Caco-2 (cell line): ENCODE measurements at regions of chr20 and their contacts with region 1.

Region 1: DNA sequence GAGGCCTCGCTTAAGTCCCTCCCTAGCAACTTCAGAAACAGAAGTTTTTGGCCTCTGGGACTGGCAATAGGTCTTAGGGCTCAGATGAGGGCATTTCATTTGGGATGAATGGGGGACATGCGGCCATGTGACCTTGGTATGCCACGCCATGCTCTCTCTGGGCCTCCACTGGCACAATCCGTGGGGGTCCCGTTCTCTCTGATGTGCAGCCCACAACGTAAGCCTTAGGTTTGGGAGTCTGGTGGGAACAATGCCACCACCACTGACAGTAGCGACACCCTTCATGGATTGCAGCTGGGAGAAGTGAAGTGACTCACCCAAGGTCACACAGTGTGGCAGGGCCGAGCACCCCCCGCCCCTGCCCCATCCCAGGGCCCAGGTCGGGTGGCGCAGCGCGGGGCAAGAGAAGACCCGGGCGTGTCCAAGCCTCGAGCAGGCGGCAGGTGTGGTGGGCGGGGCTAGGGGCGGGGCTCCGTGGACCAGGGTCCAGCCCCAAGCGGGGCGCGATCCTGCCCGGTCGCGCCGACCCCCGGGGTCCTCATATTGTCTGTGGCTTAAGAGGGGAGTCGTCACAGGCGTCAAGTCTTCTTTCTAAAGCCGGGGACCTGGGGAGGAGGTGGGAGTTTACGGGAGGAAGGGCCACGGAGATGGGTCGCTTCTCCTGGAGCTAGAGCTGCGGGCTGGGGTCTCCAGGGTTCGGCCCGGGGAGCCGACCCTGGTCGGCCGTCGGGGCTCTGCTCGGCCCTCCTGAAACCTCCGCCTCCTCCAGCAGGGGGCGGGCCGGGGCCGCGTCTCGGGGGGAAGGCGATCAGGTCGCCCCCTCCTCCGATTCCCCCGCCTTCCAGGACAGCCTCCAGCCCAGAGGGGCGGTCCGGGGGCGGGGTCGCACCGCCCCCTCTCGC is 698 bp upstream of the CEBPB start:
- DNase-seq: peak; percentile 96 to 100
- H3K4me3 ChIP-seq: peak overlapping the region; percentile 96
- H3K4me3 Mint-ChIP-seq: peak overlapping the region; percentile 94
- H3K27ac Mint-ChIP-seq: peak overlapping the region; percentile 99
- H3K4me1 ChIP-seq: peaks cover 49% of the 10 kb centered on the region
- H3K4me1 Mint-ChIP-seq: peaks cover 54% of the 10 kb centered on the region
- H3K27me3 ChIP-seq: no peaks in the 10 kb centered on the region
- H3K27me3 Mint-ChIP-seq: no peaks in the 10 kb centered on the region
- CTCF ChIP-seq: peak; percentile 99

Region 2: DNA sequence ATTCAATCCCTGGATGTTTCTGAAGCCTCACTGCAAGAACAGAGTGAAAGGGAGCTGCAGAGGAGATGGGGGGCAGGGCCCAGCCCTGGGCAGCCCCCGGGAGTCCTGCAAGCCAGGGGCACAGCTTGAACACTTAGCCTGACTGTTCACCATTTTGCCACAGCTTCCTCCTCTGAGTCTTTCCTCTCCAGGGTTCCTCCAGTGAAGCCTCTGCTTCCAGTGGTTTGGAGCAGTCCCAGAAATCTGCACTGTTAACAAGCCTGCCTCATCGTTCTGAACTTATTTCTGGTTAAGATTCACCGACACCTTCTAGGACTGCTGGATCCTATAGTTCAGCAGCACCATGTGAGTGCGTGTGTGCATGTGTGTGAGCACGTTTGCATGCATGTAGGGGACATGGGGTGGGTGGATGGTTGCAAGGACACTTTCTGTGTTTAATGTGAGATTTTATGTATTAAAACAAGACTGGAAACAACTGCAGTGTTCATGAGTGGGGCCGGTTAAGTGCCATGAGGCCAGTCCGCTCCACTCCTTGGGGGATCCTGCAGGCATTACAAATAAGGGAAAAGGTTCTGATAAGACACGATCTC is 25.3 kb after region 1 on chr20:
- CTCF ChIA-PET with region 1: interaction called, 16 read pairs
- POLR2A ChIA-PET with region 1: interaction called, 32 read pairs
- intact Hi-C with region 1: loop called (anchors 1 kb)
- DNase-seq: no peak
- H3K4me3 ChIP-seq: no peak overlapping the region
- H3K4me3 Mint-ChIP-seq: peak overlapping the region; percentile 27
- H3K27ac Mint-ChIP-seq: peak overlapping the region; percentile 27
- H3K4me1 ChIP-seq: peaks cover 62% of the 10 kb centered on the region
- H3K4me1 Mint-ChIP-seq: peaks cover 65% of the 10 kb centered on the region
- H3K27me3 ChIP-seq: no peaks in the 10 kb centered on the region
- H3K27me3 Mint-ChIP-seq: no peaks in the 10 kb centered on the region
- CTCF ChIP-seq: no peak

Region 3: DNA sequence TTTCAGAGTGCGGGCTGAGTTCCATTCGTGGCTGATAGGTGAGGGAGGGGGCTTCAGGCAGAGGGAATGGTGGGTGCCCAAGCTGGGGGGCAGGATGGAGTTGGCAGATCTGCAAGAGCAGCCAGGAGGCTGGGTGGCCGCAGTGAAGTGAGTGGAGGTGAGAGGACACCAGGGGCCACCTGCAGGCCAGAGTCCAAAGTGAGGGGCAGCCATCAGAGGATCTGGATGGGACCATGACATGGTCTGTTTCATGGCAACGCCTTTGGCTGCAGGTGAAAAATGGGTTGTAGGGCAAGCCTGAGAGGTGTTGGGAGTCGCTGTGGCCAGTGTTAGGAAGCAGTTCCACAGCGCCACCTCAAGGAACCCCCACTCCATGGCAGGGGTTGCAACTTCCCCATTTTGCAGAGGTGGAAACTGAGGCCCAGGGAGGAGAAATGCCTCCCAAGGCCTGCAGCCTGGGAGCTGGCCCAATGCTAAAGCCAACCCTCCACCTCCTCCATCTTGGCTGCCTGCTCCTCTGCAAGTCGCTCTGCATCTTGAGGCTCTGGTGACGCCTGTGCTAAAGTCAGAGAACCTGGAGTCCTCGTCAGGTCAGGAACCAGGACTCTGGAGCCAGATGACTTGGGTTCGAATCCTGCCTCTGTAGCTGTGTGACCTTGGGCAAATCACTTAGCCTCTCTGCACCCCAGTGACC is 154.4 kb after region 1 on chr20:
- CTCF ChIA-PET with region 1: interaction called, 4 read pairs
- POLR2A ChIA-PET with region 1: interaction called, 4 read pairs
- intact Hi-C with region 1: loop called (anchors 2 kb)
- DNase-seq: peak; percentile 54 to 69
- H3K4me3 ChIP-seq: no peak overlapping the region
- H3K4me3 Mint-ChIP-seq: no peak overlapping the region
- H3K27ac Mint-ChIP-seq: no peak overlapping the region
- H3K4me1 ChIP-seq: no peaks in the 10 kb centered on the region
- H3K4me1 Mint-ChIP-seq: no peaks in the 10 kb centered on the region
- H3K27me3 ChIP-seq: no peaks in the 10 kb centered on the region
- H3K27me3 Mint-ChIP-seq: no peaks in the 10 kb centered on the region
- CTCF ChIP-seq: peak; percentile 28 to 44

Region 4: GRCh38 chr20:50379049-50379990 is 189.4 kb after region 1 on chr20:
- CTCF ChIA-PET with region 1: no interaction called
- POLR2A ChIA-PET with region 1: no interaction called
- intact Hi-C with region 1: no loop called
- DNase-seq: no peak
- H3K4me3 ChIP-seq: no peak overlapping the region
- H3K4me3 Mint-ChIP-seq: no peak overlapping the region
- H3K27ac Mint-ChIP-seq: peak overlapping the region; percentile 0
- H3K4me1 ChIP-seq: peaks cover 31% of the 10 kb centered on the region
- H3K4me1 Mint-ChIP-seq: peaks cover 27% of the 10 kb centered on the region
- H3K27me3 ChIP-seq: no peaks in the 10 kb centered on the region
- H3K27me3 Mint-ChIP-seq: no peaks in the 10 kb centered on the region
- CTCF ChIP-seq: no peak

Region 5: GRCh38 chr20:50415516-50416113 is 225.7 kb after region 1 on chr20:
- CTCF ChIA-PET with region 1: no interaction called
- POLR2A ChIA-PET with region 1: no interaction called
- intact Hi-C with region 1: loop called (anchors 5 kb)
- DNase-seq: peak in 1 of 2 experiments; percentile 45
- H3K4me3 ChIP-seq: no peak overlapping the region
- H3K4me3 Mint-ChIP-seq: no peak overlapping the region
- H3K27ac Mint-ChIP-seq: peak overlapping the region; percentile 32
- H3K4me1 ChIP-seq: peaks cover 28% of the 10 kb centered on the region
- H3K4me1 Mint-ChIP-seq: peaks cover 35% of the 10 kb centered on the region
- H3K27me3 ChIP-seq: no peaks in the 10 kb centered on the region
- H3K27me3 Mint-ChIP-seq: no peaks in the 10 kb centered on the region
- CTCF ChIP-seq: no peak

Region 6: DNA sequence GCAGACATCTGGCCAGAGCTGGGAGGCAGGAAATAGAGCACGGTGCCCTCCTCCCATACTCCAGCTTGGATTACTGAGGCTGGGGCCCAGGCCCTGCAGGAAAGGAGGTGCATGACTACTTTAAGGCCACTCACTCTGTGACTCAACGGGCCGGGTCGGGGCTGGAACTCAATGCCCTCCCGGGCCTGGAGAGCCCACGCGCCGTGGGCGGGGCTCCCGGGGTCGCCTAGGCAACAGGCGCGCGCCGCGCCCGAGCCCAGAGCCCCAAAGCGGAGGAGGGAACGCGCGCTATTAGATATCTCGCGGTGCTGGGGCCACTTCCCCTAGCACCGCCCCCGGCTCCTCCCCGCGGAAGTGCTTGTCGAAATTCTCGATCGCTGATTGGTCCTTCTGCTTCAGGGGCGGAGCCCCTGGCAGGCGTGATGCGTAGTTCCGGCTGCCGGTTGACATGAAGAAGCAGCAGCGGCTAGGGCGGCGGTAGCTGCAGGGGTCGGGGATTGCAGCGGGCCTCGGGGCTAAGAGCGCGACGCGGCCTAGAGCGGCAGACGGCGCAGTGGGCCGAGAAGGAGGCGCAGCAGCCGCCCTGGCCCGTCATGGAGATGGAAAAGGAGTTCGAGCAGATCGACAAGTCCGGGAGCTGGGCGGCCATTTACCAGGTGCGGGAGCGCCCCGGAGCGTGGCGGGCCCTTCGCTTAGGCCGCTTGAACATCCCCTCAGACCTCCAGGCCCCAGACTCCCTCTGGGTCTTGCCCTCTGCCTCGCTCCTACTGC is 320.2 kb after region 1 on chr20 and contains the start of gene PTPN1:
- CTCF ChIA-PET with region 1: no interaction called
- POLR2A ChIA-PET with region 1: interaction called, 4 read pairs
- intact Hi-C with region 1: loop called (anchors 1 kb)
- DNase-seq: peak; percentile 100
- H3K4me3 ChIP-seq: peak within 1 kb of the TSS; percentile 98
- H3K4me3 Mint-ChIP-seq: peak within 1 kb of the TSS; percentile 99
- H3K27ac Mint-ChIP-seq: peak within 1 kb of the TSS; percentile 97
- H3K4me1 ChIP-seq: peaks cover 36% of the 10 kb centered on the region
- H3K4me1 Mint-ChIP-seq: peaks cover 22% of the 10 kb centered on the region
- H3K27me3 ChIP-seq: no peaks in the 10 kb centered on the region
- H3K27me3 Mint-ChIP-seq: no peaks in the 10 kb centered on the region
- CTCF ChIP-seq: peak in 1 of 2 experiments; percentile 13
- total RNA-seq, gene PTPN1: 65.0 and 65.2 TPM in 2 replicates

Region 7: DNA sequence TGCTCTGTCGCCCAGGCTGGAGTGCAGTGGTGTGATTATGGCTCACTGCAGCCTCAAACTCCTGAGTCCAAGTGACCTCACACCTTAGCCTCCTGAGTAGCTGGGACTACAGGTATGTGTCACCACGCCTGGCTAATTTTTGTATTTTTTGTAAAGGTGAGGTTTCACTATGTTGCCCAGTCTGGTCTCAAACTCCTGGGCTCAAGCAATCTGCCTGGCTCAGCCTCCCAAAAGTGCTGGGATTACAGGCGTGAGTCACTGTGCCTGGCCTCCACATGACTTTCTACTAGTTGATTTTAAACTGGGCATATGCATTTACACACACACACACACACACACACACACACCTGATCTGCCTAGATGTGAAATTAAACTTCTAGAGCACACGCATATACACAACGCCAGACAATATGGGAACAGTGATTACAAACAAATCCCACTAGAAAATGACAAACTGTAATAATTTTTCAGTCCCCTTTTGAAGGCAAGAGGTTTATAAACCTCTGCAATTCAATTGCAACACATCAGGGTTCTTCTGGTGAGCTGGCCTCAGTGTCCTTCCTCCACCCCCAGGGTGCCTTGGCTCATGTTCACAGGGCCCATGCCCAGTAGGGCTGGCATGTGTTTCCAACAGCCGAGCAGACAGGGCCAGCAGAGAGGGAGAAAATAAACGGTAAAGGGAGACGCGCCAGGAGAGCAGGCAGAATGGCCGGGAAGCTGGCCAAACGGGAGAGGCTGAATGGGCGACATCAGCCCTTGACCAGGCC is 572.7 kb after region 1 on chr20:
- CTCF ChIA-PET with region 1: no interaction called
- POLR2A ChIA-PET with region 1: no interaction called
- intact Hi-C with region 1: loop called (anchors 10 kb)
- DNase-seq: peak; percentile 54 to 72
- H3K4me3 ChIP-seq: no peak overlapping the region
- H3K4me3 Mint-ChIP-seq: peak overlapping the region; percentile 78
- H3K27ac Mint-ChIP-seq: peak overlapping the region; percentile 100
- H3K4me1 ChIP-seq: peaks cover 87% of the 10 kb centered on the region
- H3K4me1 Mint-ChIP-seq: peaks cover 82% of the 10 kb centered on the region
- H3K27me3 ChIP-seq: no peaks in the 10 kb centered on the region
- H3K27me3 Mint-ChIP-seq: no peaks in the 10 kb centered on the region
- CTCF ChIP-seq: no peak